Psoas muscle (tissue), 8 donors: ENCODE measurements at regions of chr16 and their contacts with region 1.

Region 1: DNA sequence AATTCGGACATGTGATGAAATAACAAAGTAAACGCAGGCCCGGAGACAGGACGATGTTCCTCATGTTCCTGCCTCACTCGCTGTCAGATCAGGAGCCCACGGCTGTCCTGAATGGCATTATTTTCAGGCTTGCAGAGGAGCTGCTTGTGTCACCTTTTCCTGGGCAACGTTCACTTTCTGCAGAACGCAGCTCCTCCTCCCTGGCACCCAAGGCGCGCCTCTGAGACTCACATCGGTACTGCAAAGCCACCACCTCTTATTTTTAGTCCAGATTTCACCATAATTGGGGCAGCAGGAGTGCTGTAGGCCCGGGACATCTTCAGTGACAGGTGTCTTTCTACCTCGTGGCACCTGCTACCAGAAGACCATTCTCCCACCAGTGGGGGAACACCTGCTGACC is 8.0 kb upstream of the C16orf96 start:
- DNase-seq: peak in 1 of 2 donors; percentile 20
- ATAC-seq: no peak
- H3K4me3 ChIP-seq: no peak overlapping the region
- H3K27ac ChIP-seq: no peak overlapping the region
- H3K4me1 ChIP-seq: no peaks in the 10 kb centered on the region
- H3K27me3 ChIP-seq: no peaks in the 10 kb centered on the region
- CTCF ChIP-seq: no peak

Region 2: GRCh38 chr16:4506450-4506849 is 41.7 kb before region 1 on chr16:
- intact Hi-C with region 1: loop called (anchors 2 kb)
- DNase-seq: no peak
- ATAC-seq: peak; percentile 84 to 94 (median 91)
- H3K4me3 ChIP-seq: no peak overlapping the region
- H3K27ac ChIP-seq: peak overlapping the region; percentile 14
- H3K4me1 ChIP-seq: no peaks in the 10 kb centered on the region
- H3K27me3 ChIP-seq: no peaks in the 10 kb centered on the region
- CTCF ChIP-seq: peak; percentile 85

Region 3: DNA sequence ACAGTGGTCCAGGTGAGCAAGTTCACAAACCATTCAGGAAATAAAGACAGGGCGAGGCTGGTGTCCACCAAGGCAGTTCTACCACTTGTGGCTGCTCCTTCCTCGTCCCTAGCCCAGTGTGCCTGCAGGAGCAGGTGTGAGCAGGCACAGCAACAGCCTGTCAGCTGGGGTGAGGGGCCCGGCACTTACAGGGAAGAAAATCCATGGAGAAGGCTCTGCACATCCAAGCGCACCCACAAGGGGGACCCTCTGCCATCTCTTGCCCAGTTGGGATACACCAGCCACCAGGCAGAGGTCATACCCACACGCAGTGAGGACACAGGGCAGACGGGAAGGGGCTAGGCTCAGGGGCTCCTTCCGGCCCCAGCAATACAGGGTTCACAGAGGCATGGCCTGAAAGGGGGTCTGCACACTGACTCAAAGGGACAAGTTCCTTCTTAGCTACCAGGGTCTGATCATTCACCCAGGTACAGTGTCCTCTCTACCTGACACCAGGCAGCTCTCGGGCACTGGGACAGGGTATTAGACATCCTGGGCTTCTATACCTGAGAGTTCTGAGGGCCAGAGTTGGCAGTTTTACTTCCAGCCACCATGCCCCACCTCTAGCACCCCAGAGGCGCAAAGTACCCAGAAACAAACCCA is 36.6 kb before region 1 on chr16:
- intact Hi-C with region 1: loop called (anchors 2 kb)
- DNase-seq: no peak
- ATAC-seq: peak; percentile 53 to 68 (median 58)
- H3K4me3 ChIP-seq: no peak overlapping the region
- H3K27ac ChIP-seq: no peak overlapping the region
- H3K4me1 ChIP-seq: peaks cover 4% of the 10 kb centered on the region
- H3K27me3 ChIP-seq: no peaks in the 10 kb centered on the region
- CTCF ChIP-seq: peak; percentile 45